CD8-positive, alpha-beta T cell (primary cell): ENCODE measurements at regions of chr5 and their contacts with region 1.

Region 1: DNA sequence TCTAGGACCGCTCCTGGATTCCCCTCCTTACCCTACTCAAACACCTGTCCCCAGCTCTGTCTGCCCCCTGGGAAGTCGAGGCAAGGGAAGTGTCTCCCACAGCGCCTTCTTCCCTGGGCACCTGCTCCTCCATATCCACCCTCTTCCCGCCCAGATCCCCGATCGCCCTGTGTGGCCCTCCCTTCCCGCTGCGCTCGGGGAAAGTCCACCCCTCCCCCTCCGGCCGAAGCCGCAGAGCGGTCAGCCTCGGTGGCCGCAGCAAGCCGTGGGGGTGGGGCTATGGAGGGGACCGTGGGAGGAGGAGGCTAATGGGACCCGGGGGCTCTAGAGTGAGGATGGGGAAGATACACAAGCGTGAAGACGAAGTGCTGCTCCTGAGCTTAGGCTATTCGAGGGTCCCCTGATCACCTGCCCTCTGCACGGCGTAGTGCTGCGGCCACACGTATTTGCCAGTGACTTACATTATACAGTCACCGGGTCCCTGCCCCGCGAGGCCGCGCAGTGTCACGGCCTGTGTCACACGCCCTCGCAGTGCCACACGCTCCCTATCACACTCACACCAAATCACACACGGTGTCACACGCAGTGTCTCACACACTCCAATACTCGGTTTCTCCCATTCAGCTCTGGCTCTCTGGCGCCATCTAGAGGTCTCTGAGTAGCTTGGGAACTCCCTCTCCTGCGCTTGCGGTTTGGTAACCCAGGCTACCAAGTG is 658 bp upstream of the PCDH1 start:
- DNase-seq: peak; percentile 73 to 96 (median 90)
- ATAC-seq: peak; percentile 84
- H3K4me3 ChIP-seq: peak overlapping the region; percentile 48 to 73
- H3K4me3 Mint-ChIP-seq: peak overlapping the region; percentile 76
- H3K27ac ChIP-seq: no peak overlapping the region
- H3K27ac Mint-ChIP-seq: peak overlapping the region; percentile 1
- H3K4me1 ChIP-seq: peaks cover 35% of the 10 kb centered on the region
- H3K4me1 Mint-ChIP-seq: peaks cover 26% of the 10 kb centered on the region
- H3K27me3 ChIP-seq: peaks cover 43 to 60% of the 10 kb centered on the region in 2 experiments
- H3K27me3 Mint-ChIP-seq: peaks cover 76% of the 10 kb centered on the region
- CTCF ChIP-seq: peak; percentile 98

Region 2: GRCh38 chr5:141664732-141665461 is 214.0 kb before region 1 on chr5:
- CTCF ChIA-PET with region 1: interaction called, 85 read pairs
- POLR2A ChIA-PET with region 1: no interaction called
- intact Hi-C with region 1: loop called (anchors 1 kb)
- DNase-seq: peak; percentile 49 to 88 (median 76)
- ATAC-seq: peak; percentile 83
- H3K4me3 ChIP-seq: no peak overlapping the region
- H3K4me3 Mint-ChIP-seq: no peak overlapping the region
- H3K27ac ChIP-seq: no peak overlapping the region
- H3K27ac Mint-ChIP-seq: no peak overlapping the region
- H3K4me1 ChIP-seq: no peaks in the 10 kb centered on the region
- H3K4me1 Mint-ChIP-seq: peaks cover 3% of the 10 kb centered on the region
- H3K27me3 ChIP-seq: no peaks in the 10 kb centered on the region
- H3K27me3 Mint-ChIP-seq: no peaks in the 10 kb centered on the region
- CTCF ChIP-seq: peak; percentile 83

Region 3: GRCh38 chr5:141681695-141682641 is 196.9 kb before region 1 on chr5 and contains the start of gene ARAP3:
- CTCF ChIA-PET with region 1: interaction called, 11 read pairs
- POLR2A ChIA-PET with region 1: no interaction called
- intact Hi-C with region 1: no loop called
- DNase-seq: peak in 7 of 9 experiments; percentile 30 to 78 (median 49)
- ATAC-seq: peak; percentile 54
- H3K4me3 ChIP-seq: peak within 1 kb of the TSS; percentile 55 to 56
- H3K4me3 Mint-ChIP-seq: peak within 1 kb of the TSS; percentile 76
- H3K27ac ChIP-seq: peak within 1 kb of the TSS in 1 of 2 experiments; percentile 34
- H3K27ac Mint-ChIP-seq: peak within 1 kb of the TSS; percentile 49
- H3K4me1 ChIP-seq: peaks cover 30% of the 10 kb centered on the region
- H3K4me1 Mint-ChIP-seq: peaks cover 28% of the 10 kb centered on the region
- H3K27me3 ChIP-seq: no peaks in the 10 kb centered on the region
- H3K27me3 Mint-ChIP-seq: no peaks in the 10 kb centered on the region
- CTCF ChIP-seq: no peak
- total RNA-seq, gene ARAP3: 0.73 to 1.2 TPM

Region 4: DNA sequence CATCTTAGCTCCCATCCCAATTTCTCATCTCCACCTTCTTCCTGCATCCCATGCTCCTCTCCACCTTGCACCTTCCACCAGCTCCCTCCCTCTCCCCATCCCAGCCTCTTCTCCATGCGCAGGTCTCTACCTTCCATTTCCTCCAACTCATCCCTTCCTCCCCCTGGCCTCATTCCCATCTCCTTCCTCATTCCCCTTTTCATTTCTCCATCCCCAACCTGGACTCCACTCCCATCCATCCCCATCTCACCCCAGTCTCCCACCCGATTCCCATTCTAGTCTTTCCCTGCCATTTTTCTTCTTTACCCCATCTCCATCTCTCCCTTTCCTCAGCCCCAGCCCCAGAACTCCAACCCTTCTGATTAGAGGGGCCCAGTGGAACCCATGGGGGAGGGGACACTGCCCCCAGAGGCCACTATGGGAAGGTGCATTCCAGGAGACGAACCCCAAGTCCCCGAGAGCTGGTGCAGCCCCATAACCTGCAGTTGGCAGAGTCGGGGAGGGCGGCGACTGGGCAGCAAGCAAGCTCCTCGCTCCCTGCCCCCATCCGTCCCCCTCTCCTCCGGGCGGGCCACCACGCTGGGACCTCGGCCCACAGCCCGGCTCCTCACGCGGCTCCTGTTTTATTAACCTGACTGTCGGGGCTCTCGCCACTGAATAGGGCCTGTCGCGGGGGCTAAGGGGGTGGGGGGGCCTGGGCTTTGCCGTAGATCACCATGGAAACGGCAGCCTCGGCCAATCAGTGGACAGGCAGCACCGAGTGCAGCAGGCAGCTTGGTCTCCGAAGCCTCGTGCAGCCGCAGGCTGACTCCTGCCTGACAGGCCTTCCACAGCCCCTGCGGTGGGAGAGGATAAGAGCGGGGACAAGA is 67.3 kb before region 1 on chr5:
- CTCF ChIA-PET with region 1: interaction called, 49 read pairs
- POLR2A ChIA-PET with region 1: no interaction called
- intact Hi-C with region 1: loop called (anchors 2 to 5 kb)
- DNase-seq: peak in 7 of 9 experiments; percentile 2 to 61 (median 39)
- ATAC-seq: peak; percentile 83
- H3K4me3 ChIP-seq: no peak overlapping the region
- H3K4me3 Mint-ChIP-seq: no peak overlapping the region
- H3K27ac ChIP-seq: no peak overlapping the region
- H3K27ac Mint-ChIP-seq: no peak overlapping the region
- H3K4me1 ChIP-seq: no peaks in the 10 kb centered on the region
- H3K4me1 Mint-ChIP-seq: peaks cover 2% of the 10 kb centered on the region
- H3K27me3 ChIP-seq: peaks cover 5 to 11% of the 10 kb centered on the region in 2 experiments
- H3K27me3 Mint-ChIP-seq: peaks cover 47% of the 10 kb centered on the region
- CTCF ChIP-seq: peak; percentile 76

Region 5: DNA sequence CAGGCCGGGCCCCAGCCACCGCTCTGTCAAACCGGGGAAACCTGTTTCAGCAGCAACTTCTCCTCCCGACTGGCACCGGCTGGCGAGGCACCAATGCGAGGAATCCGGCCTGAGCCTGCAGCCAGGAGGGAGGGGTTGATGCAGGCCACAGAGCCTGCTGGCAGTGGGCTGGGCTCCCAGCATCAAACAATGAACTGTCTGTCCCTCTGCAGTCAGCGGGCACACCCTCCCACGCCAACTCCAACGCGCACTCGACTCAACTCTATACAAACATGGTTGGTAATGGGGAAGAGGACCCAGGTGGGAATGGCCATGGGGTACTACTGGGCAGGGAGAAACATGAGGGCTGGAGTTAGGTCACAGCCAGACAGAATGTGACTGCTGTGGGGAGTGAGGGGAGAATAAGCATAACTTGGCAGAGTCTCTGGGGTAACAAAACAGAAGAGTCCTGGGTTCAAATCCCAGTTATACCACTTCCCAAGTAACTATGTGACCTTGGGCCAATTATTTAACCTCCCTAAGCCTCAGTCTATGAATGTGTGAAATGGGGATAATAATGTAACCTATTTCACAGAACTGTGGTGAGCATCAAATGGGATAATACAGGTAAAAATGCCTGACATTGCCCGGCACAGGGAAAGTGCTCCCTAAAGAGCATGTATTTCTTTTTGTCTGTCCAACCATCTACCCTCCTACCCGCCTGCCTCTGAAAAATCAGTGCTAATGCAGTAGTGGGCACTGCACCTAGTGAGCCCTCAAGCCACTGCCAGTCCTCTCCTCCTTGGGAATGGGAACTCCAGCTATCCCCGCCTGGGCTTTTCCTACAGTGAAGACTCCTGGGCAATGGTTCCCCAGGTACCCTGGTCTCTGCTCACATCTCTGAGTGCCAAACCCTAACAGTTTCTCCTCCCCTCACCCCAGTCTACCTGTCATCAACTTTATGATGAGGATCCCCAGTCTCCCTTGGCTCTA is 12.4 kb before region 1 on chr5:
- CTCF ChIA-PET with region 1: interaction called, 35 read pairs
- POLR2A ChIA-PET with region 1: no interaction called
- intact Hi-C with region 1: no loop called
- DNase-seq: no peak
- ATAC-seq: no peak
- H3K4me3 ChIP-seq: no peak overlapping the region
- H3K4me3 Mint-ChIP-seq: no peak overlapping the region
- H3K27ac ChIP-seq: no peak overlapping the region
- H3K27ac Mint-ChIP-seq: no peak overlapping the region
- H3K4me1 ChIP-seq: no peaks in the 10 kb centered on the region
- H3K4me1 Mint-ChIP-seq: no peaks in the 10 kb centered on the region
- H3K27me3 ChIP-seq: no peaks in the 10 kb centered on the region
- H3K27me3 Mint-ChIP-seq: peaks cover 24% of the 10 kb centered on the region
- CTCF ChIP-seq: no peak

Region 6: GRCh38 chr5:141914199-141914743 is 35.4 kb after region 1 on chr5:
- CTCF ChIA-PET with region 1: interaction called, 19 read pairs
- POLR2A ChIA-PET with region 1: no interaction called
- intact Hi-C with region 1: no loop called
- DNase-seq: peak in 6 of 9 experiments; percentile 5 to 55 (median 34)
- ATAC-seq: peak; percentile 63
- H3K4me3 ChIP-seq: peak overlapping the region; percentile 35 to 37
- H3K4me3 Mint-ChIP-seq: peak overlapping the region; percentile 58
- H3K27ac ChIP-seq: no peak overlapping the region
- H3K27ac Mint-ChIP-seq: no peak overlapping the region
- H3K4me1 ChIP-seq: peaks cover 9% of the 10 kb centered on the region
- H3K4me1 Mint-ChIP-seq: peaks cover 12% of the 10 kb centered on the region
- H3K27me3 ChIP-seq: peaks cover 4 to 13% of the 10 kb centered on the region in 2 experiments
- H3K27me3 Mint-ChIP-seq: peaks cover 32% of the 10 kb centered on the region
- CTCF ChIP-seq: no peak

Region 7: DNA sequence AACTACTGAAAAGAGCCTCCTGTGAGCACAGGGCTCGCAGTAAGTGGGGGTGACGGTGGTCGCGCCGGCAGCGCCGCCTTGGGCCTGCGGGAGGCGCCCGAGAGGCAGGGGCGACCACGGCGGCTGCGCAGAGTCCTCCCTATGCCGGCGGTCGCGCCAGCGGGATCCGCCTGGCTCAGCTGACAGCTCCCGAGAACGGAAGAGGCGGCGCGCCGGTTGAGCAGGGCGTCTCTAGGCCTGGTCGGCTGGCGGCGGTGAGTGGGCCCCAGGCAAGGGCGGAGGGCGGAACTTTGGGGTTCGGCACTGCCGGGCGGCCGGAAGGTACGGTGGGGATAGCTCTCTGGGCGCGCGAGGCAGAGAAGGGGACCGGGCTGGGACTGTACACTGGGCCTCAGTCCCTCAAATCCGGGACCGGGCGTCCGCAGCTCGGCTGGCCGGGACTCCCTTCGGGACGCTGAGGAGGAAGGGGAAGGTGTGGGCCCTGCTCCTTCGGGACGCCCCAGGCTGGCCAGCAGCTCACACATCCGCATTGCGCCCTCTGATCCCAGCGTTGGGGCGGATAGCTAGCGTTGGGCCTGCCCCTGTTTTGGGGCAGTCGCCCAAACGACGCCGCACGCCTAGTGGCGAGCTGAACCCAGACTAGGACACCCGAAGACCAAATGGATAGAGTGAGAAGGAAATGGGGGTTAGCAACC is 90.2 kb after region 1 on chr5 and contains the start of gene RNF14:
- CTCF ChIA-PET with region 1: interaction called, 16 read pairs
- POLR2A ChIA-PET with region 1: interaction called, 3 read pairs
- intact Hi-C with region 1: no loop called
- DNase-seq: peak; percentile 86 to 97 (median 92)
- ATAC-seq: peak; percentile 94
- H3K4me3 ChIP-seq: peak within 1 kb of the TSS; percentile 77 to 94
- H3K4me3 Mint-ChIP-seq: peak within 1 kb of the TSS; percentile 98
- H3K27ac ChIP-seq: peak within 1 kb of the TSS; percentile 80 to 97
- H3K27ac Mint-ChIP-seq: peak within 1 kb of the TSS; percentile 99
- H3K4me1 ChIP-seq: peaks cover 18% of the 10 kb centered on the region
- H3K4me1 Mint-ChIP-seq: peaks cover 27% of the 10 kb centered on the region
- H3K27me3 ChIP-seq: no peaks in the 10 kb centered on the region
- H3K27me3 Mint-ChIP-seq: no peaks in the 10 kb centered on the region
- CTCF ChIP-seq: peak; percentile 98
- total RNA-seq, gene RNF14: 11.3 to 12.8 TPM